ENCODE measurements at regions of chr11 and their contacts with region 1.

Region 1: DNA sequence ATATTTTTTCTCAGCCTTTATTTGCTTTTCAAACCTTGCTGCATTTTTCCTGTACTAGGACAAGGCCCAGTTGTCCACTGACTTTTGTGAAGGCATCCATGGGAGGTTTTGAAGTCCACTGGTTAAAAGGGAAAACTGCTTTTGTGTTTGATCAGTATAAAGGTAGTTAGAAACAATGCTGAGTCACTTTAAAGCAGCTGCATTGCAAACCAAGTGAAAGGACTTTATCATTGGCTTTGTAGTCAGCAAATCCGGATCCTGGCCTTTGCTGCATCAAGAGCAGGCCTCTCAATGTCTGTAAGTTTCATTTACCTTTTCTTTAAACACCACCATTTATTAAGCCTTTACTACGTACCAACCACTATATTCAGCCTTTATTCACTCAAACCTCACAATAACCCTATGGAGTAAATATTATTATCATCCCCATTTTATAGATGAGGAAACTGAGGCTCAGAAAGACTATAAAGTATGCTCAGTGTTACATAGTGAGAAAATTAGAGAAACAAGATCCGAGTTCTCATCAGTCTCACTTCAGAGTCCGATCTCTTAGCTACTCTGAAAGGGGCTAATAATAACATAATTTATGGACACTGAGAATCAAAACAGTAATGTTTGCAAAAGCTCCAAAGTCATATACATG is 60.6 kb upstream of the HSD17B12 start:
- DNase-seq: no peak
- H3K4me3 ChIP-seq: no peak overlapping the region
- H3K27ac ChIP-seq: no peak overlapping the region
- H3K4me1 ChIP-seq: no peaks in the 10 kb centered on the region
- H3K27me3 ChIP-seq: no peaks in the 10 kb centered on the region
- CTCF ChIP-seq: no peak

Region 2: GRCh38 chr11:43135966-43136534 is 483.9 kb before region 1 on chr11:
- intact Hi-C with region 1: no loop called
- DNase-seq: no peak
- H3K4me3 ChIP-seq: no peak overlapping the region
- H3K27ac ChIP-seq: no peak overlapping the region
- H3K4me1 ChIP-seq: no peaks in the 10 kb centered on the region
- H3K27me3 ChIP-seq: no peaks in the 10 kb centered on the region
- CTCF ChIP-seq: no peak

Region 3: DNA sequence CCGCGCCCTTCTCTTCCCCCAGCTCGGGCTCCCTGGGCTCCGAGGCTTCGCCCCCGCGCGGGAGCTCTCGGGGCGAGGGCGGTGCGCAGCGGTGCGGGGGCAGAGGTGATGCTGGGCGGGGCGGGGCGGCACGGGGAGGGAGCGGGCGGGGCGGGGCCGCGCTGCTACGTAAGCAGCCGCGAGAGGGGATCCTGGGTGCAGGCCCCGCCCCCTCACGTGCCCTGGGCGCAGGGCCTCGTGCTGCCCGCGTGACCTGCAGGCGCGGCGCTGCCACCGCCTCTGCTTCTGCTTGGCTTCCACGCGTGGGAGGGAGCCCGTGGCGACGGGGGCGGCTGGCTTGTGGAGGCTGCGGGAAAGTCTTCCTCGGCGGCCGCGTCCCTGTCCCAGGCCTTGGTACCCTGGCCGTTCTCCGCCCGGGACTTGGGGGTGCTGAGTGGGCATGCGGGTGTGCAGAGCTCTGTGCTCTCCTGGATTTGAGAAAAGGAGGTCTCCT is 72.0 kb before region 1 on chr11:
- intact Hi-C with region 1: no loop called
- DNase-seq: no peak
- H3K4me3 ChIP-seq: peak overlapping the region; percentile 33 to 45
- H3K27ac ChIP-seq: no peak overlapping the region
- H3K4me1 ChIP-seq: no peaks in the 10 kb centered on the region
- H3K27me3 ChIP-seq: no peaks in the 10 kb centered on the region
- CTCF ChIP-seq: no peak

Region 4: DNA sequence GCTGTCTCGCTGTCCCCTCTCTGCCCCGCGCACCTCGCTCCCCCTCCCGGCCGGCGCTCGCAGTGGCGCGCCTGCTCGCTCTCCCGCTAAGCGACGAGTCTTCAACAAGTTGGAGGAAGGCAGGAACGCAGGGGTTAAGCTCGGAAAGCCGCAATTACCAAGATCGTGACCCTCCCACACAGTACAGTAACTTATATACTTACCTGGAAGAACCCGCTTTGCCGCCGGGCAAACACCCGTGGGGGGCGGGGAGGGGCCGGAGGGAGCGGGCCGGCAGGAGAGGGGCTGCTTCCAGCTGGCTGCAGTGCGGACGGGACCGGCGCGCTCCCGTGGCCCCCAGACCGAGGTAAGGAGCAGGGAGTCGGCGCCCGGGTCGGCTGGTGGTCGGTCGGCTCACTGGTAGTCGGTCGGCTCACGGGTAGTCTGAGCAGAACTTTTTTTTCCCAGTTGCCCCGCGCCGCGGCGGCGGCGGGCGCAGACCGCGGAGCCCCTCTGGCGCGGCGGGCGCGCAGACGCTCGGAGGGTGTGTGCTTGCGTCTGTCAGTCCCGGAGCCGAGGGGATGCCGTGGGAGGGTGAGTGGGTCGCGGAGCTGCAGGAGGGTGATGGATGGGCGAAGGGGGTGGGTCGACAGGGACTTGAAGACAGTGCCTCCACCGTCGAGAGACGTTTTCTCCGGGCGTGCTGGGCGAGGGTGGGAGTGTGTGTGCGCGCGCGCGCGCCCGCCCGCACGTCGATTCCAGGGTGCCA is 40.6 kb before region 1 on chr11:
- intact Hi-C with region 1: loop called (anchors 5 kb)
- DNase-seq: no peak
- H3K4me3 ChIP-seq: peak overlapping the region; percentile 49 to 68
- H3K27ac ChIP-seq: no peak overlapping the region
- H3K4me1 ChIP-seq: peaks cover 2 to 28% of the 10 kb centered on the region in 2 donors
- H3K27me3 ChIP-seq: peaks cover 38% of the 10 kb centered on the region
- CTCF ChIP-seq: peak in 1 of 3 experiments; percentile 24